ENCODE measurements at regions of chr2 and their contacts with region 1.

Region 1: DNA sequence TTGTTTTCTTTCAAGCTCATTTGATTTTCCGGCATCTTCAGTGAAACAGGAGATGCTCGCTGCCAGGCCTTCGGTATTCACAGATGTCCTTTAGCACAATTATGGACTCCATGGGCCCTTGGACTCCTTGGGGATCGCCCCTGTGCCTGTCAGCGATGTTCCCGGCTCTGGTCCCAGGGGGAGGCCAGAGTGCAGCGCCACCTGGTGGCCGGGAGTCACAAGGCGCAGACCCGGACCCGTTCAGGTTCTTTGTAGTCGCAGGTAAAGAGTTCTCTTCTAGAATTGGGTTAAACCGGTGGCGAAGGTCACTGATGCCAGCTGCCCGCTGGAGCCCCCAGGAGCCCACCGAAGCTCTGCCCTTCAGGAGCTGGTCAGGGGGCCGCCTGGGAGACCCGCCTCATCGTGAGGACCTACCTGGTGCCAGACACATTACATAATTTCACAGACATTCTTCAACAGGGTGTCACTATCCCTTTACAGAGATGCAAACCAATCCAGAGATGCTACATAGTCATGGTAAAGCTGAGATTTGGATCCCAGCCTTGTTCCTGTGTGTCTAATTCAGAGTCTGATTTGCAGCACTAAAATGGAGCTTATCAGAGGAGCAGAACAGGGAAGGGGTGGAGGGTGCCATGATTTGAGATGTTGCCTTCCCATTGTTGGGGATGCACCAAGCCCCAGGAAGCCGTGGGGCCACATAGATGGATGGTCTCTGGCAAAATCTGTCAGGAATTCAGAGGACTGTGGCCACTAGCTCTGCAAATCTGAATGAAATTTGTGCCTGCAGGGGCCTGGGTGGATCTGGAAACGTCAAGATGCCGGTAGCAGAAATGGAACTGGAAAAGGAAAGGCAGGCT is 6.0 kb upstream of the INPP5D start:
- DNase-seq: peak; percentile 62 to 79
- ATAC-seq: peak; percentile 69 to 80 (median 74)
- H3K4me3 ChIP-seq: no peak overlapping the region
- H3K27ac ChIP-seq: no peak overlapping the region
- H3K4me1 ChIP-seq: no peaks in the 10 kb centered on the region
- H3K27me3 ChIP-seq: no peaks in the 10 kb centered on the region
- CTCF ChIP-seq: peak; percentile 85

Region 2: GRCh38 chr2:232600053-232600773 is 453.9 kb before region 1 on chr2:
- intact Hi-C with region 1: loop called in 1 of 2 experiments (anchors 10 kb)
- DNase-seq: no peak
- ATAC-seq: peak in 2 of 4 donors; percentile 58 to 65
- H3K4me3 ChIP-seq: no peak overlapping the region
- H3K27ac ChIP-seq: no peak overlapping the region
- H3K4me1 ChIP-seq: peaks cover 5% of the 10 kb centered on the region
- H3K27me3 ChIP-seq: no peaks in the 10 kb centered on the region
- CTCF ChIP-seq: no peak

Region 3: DNA sequence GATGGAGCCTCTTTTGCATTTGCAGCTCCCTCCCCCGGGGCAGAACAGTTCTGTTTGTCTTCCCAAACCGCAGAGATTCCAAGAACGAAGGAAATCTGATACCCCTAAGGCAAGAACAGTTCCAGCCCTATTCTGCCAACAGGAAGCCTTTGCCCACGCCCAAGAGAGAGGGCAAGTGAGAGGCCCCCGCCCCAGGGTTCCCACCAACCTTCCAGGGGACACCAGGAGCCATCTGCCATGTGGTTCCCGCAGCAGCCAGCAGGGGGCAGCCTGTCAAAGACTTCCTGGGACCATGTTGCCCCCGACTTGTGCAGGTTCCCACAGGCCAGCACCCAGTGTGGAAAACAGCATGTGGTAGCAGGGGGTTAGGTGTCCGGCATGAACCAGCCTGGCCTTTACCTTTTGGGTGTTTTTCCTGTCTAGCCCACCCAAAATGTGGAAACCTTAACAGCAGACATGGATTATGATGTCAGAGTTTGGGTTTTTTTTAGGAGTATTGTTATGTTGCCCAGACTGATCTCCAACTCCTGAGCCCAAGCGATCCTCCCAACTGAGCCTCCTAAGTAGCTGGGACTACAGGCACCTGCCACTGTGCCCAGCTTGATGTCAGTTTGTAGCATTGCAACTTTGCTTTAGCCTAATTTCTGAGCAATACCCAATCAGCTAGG is 442.5 kb before region 1 on chr2:
- intact Hi-C with region 1: loop called (anchors 5 to 10 kb)
- DNase-seq: peak; percentile 74 to 81
- ATAC-seq: peak; percentile 55 to 81 (median 75)
- H3K4me3 ChIP-seq: no peak overlapping the region
- H3K27ac ChIP-seq: no peak overlapping the region
- H3K4me1 ChIP-seq: no peaks in the 10 kb centered on the region
- H3K27me3 ChIP-seq: no peaks in the 10 kb centered on the region
- CTCF ChIP-seq: peak; percentile 72

Region 4: GRCh38 chr2:232854082-232854481 is 200.1 kb before region 1 on chr2:
- intact Hi-C with region 1: loop called (anchors 5 kb)
- DNase-seq: no peak
- ATAC-seq: no peak
- H3K4me3 ChIP-seq: no peak overlapping the region
- H3K27ac ChIP-seq: peak overlapping the region; percentile 80
- H3K4me1 ChIP-seq: peaks cover 45% of the 10 kb centered on the region
- H3K27me3 ChIP-seq: no peaks in the 10 kb centered on the region
- CTCF ChIP-seq: no peak

Region 5: GRCh38 chr2:232887171-232887850 is 166.8 kb before region 1 on chr2:
- intact Hi-C with region 1: loop called in 1 of 2 experiments (anchors 10 kb)
- DNase-seq: no peak
- ATAC-seq: no peak
- H3K4me3 ChIP-seq: no peak overlapping the region
- H3K27ac ChIP-seq: no peak overlapping the region
- H3K4me1 ChIP-seq: peaks cover 8% of the 10 kb centered on the region
- H3K27me3 ChIP-seq: no peaks in the 10 kb centered on the region
- CTCF ChIP-seq: no peak